HEK293T (cell line): ENCODE measurements at regions of chr1 and their contacts with region 1.

Region 1: GRCh38 chr1:100868364-100868995 is 26.2 kb downstream of the EXTL2 start:
- DNase-seq: peak; percentile 13

Region 2: GRCh38 chr1:100463809-100464424 is 404.6 kb before region 1 on chr1:
- CTCF ChIA-PET with region 1: interaction called, 27 read pairs
- POLR2A ChIA-PET with region 1: no interaction called
- DNase-seq: peak; percentile 77

Region 3: DNA sequence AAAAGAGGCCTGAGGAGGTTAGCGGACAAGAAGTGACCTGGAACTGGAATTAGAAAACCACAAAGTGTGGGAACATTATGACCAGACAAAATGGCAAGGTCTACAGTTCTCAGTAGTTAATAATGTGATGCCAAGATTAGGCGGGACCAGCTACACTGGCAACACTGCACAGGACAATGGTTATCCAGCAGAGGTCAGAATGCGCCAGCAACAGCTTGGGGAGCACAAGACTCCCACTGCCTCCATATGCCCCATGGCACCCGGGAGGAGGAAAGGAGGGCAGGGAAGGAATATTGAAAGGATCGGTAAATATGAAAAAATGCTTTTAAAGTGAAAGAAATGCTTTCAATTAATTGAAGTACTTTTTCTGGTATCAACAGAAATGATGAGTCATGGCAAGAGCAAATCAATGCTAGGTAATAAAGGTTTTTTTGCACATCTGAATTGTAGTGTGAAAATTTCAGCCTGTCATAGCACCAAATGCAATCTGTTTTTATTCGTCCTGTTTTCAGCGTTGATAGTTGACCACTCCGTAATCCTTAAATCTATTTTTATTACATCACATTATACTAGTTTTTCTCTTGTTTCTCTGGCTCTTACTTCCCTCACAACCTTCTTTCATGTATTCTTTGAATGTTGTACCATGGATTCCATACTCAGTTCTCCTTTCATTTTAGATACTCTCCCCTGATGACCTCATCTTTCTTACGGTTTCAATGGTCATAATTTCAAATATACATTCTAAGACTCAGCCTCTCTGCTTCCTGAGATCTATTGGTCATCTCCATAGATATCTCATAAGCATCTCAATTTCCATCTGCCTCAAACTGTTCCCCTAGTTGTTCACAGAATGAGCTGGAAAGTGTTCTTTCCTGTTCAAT is 118.2 kb before region 1 on chr1:
- CTCF ChIA-PET with region 1: no interaction called
- POLR2A ChIA-PET with region 1: no interaction called
- DNase-seq: no peak

Region 4: DNA sequence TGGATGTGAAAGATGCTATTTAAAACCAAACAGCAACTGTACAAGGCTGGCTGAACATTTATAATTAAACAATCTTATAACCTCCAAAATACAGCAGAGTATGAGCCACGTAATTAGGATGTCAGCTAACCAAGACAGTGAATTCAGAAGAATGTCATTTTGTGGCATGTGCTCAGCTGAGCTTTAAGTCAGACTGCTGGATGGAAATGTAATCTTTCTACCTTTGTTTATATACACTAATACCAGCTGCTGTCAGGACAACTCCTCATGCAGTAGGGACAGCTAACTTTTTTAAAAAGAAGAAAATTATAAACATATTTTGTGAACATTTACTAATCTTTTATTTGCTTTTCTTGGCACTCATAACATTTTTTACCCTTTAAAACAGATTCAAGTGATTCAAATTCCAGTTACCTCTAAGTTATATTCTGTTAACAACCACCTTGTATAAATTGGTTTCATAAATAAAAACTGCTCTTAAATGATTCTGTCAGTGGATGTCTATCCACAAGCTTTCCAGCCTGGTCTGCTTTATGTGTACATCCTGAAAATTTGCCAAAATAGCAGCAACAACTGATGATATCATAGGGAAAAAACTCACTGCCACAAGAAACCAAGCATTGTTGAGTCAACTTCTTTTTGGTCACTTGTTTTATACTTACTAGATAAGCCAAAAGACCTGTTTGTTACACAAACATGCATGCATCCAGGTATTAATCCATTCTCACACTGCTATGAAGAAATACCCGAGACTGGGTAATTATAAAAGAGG is 121.0 kb after region 1 on chr1:
- CTCF ChIA-PET with region 1: no interaction called
- POLR2A ChIA-PET with region 1: no interaction called
- DNase-seq: no peak